CD8-positive, alpha-beta T cell (primary cell): ENCODE measurements at regions of chr6 and their contacts with region 1.

Region 1: GRCh38 chr6:26025894-26026832 is 61.1 kb upstream of the HFE start:
- DNase-seq: peak; percentile 74 to 99 (median 89)
- ATAC-seq: peak; percentile 43
- H3K4me3 ChIP-seq: peak overlapping the region; percentile 50 to 76
- H3K4me3 Mint-ChIP-seq: peak overlapping the region; percentile 86
- H3K27ac ChIP-seq: peak overlapping the region; percentile 93 to 96
- H3K27ac Mint-ChIP-seq: peak overlapping the region; percentile 98
- H3K4me1 ChIP-seq: peaks cover 25% of the 10 kb centered on the region
- H3K4me1 Mint-ChIP-seq: peaks cover 48% of the 10 kb centered on the region
- H3K27me3 ChIP-seq: no peaks in the 10 kb centered on the region
- H3K27me3 Mint-ChIP-seq: no peaks in the 10 kb centered on the region
- CTCF ChIP-seq: peak; percentile 80

Region 2: DNA sequence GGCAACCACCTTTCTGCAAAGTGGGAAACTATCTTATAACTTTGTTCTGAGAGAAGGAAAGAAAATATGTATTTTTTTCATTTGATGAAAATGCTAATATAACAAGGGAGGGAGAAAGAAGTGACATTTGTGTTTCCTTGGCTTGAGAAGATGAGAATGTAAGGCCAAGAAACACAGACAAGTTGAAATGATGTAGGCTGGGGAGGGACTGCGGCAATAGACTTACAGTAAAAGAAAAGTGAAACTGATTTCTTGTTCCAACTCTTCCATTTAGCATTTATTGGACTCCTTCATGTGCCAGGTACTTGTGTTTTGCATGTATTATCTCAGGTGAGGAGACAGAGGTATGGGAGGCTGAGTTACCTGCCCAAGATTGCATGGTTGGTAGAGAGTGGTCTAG is 616.1 kb before region 1 on chr6:
- CTCF ChIA-PET with region 1: no interaction called
- POLR2A ChIA-PET with region 1: no interaction called
- intact Hi-C with region 1: no loop called
- DNase-seq: peak in 1 of 9 experiments; percentile 27
- ATAC-seq: peak; percentile 62
- H3K4me3 ChIP-seq: peak overlapping the region in 1 of 2 experiments; percentile 41
- H3K4me3 Mint-ChIP-seq: peak overlapping the region; percentile 78
- H3K27ac ChIP-seq: no peak overlapping the region
- H3K27ac Mint-ChIP-seq: peak overlapping the region; percentile 85
- H3K4me1 ChIP-seq: peaks cover 59% of the 10 kb centered on the region
- H3K4me1 Mint-ChIP-seq: peaks cover 50% of the 10 kb centered on the region
- H3K27me3 ChIP-seq: no peaks in the 10 kb centered on the region
- H3K27me3 Mint-ChIP-seq: no peaks in the 10 kb centered on the region
- CTCF ChIP-seq: no peak

Region 3: DNA sequence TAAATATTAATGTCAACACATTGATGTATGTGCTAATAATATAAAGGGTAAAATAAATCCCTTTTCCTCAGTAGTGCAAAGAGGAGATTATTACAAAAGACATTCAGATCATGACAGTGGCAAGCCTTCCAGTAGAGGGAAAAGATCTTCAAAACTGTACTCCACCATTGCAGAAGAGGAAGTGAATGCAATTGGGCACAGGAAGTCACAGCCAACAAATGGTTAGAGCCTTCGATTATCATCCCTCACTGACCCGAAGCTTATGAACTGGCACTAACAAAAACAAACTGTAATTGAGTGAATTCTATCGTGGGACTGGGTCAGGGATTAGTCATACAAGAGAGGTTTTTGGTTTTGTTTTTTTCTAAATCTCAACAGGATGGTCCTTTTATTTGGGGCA is 413.5 kb before region 1 on chr6:
- CTCF ChIA-PET with region 1: no interaction called
- POLR2A ChIA-PET with region 1: no interaction called
- intact Hi-C with region 1: no loop called
- DNase-seq: no peak
- ATAC-seq: no peak
- H3K4me3 ChIP-seq: no peak overlapping the region
- H3K4me3 Mint-ChIP-seq: no peak overlapping the region
- H3K27ac ChIP-seq: no peak overlapping the region
- H3K27ac Mint-ChIP-seq: no peak overlapping the region
- H3K4me1 ChIP-seq: no peaks in the 10 kb centered on the region
- H3K4me1 Mint-ChIP-seq: no peaks in the 10 kb centered on the region
- H3K27me3 ChIP-seq: no peaks in the 10 kb centered on the region
- H3K27me3 Mint-ChIP-seq: no peaks in the 10 kb centered on the region
- CTCF ChIP-seq: no peak

Region 4: GRCh38 chr6:25992413-25993037 is 33.6 kb before region 1 on chr6:
- CTCF ChIA-PET with region 1: interaction called, 43 read pairs
- POLR2A ChIA-PET with region 1: interaction called, 63 read pairs
- intact Hi-C with region 1: no loop called
- DNase-seq: peak; percentile 87 to 97 (median 94)
- ATAC-seq: peak; percentile 96
- H3K4me3 ChIP-seq: peak overlapping the region; percentile 62 to 85
- H3K4me3 Mint-ChIP-seq: peak overlapping the region; percentile 96
- H3K27ac ChIP-seq: peak overlapping the region; percentile 63 to 81
- H3K27ac Mint-ChIP-seq: peak overlapping the region; percentile 96
- H3K4me1 ChIP-seq: peaks cover 3% of the 10 kb centered on the region
- H3K4me1 Mint-ChIP-seq: peaks cover 32% of the 10 kb centered on the region
- H3K27me3 ChIP-seq: no peaks in the 10 kb centered on the region
- H3K27me3 Mint-ChIP-seq: no peaks in the 10 kb centered on the region
- CTCF ChIP-seq: peak; percentile 100

Region 5: DNA sequence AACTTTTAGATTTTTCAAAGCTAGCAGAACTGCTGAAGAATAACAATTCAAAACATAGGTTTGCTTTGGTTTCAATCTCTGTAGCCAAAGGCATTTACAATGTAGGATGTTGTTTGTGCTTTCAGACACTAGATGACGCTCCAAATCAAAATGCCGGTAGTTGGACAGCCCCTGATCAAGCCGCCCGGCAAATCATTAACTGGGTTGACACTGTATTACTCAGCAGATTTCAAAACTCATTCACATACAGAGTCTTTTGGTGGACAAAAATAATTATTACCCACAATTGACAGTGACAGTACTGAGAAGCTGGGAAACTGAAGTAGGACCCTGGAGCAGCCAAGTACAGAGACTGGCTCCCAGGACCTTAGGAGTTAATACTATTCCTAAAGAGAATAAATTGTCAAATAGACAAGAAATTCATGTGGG is 39.8 kb after region 1 on chr6:
- CTCF ChIA-PET with region 1: interaction called, 18 read pairs
- POLR2A ChIA-PET with region 1: interaction called, 3 read pairs
- intact Hi-C with region 1: no loop called
- DNase-seq: peak in 7 of 9 experiments; percentile 32 to 86 (median 58)
- ATAC-seq: peak; percentile 95
- H3K4me3 ChIP-seq: no peak overlapping the region
- H3K4me3 Mint-ChIP-seq: no peak overlapping the region
- H3K27ac ChIP-seq: no peak overlapping the region
- H3K27ac Mint-ChIP-seq: no peak overlapping the region
- H3K4me1 ChIP-seq: peaks cover 6% of the 10 kb centered on the region
- H3K4me1 Mint-ChIP-seq: peaks cover 5% of the 10 kb centered on the region
- H3K27me3 ChIP-seq: no peaks in the 10 kb centered on the region
- H3K27me3 Mint-ChIP-seq: peaks cover 1% of the 10 kb centered on the region
- CTCF ChIP-seq: peak; percentile 95

Region 6: GRCh38 chr6:26196846-26197648 is 170.9 kb after region 1 on chr6:
- CTCF ChIA-PET with region 1: interaction called, 3 read pairs
- POLR2A ChIA-PET with region 1: interaction called, 64 read pairs
- intact Hi-C with region 1: loop called in 1 of 2 experiments (anchors 5 kb)
- DNase-seq: peak; percentile 53 to 95 (median 79)
- ATAC-seq: peak; percentile 57
- H3K4me3 ChIP-seq: peak overlapping the region; percentile 78 to 82
- H3K4me3 Mint-ChIP-seq: peak overlapping the region; percentile 96
- H3K27ac ChIP-seq: peak overlapping the region; percentile 88 to 89
- H3K27ac Mint-ChIP-seq: peak overlapping the region; percentile 99
- H3K4me1 ChIP-seq: peaks cover 20% of the 10 kb centered on the region
- H3K4me1 Mint-ChIP-seq: peaks cover 44% of the 10 kb centered on the region
- H3K27me3 ChIP-seq: no peaks in the 10 kb centered on the region
- H3K27me3 Mint-ChIP-seq: no peaks in the 10 kb centered on the region
- CTCF ChIP-seq: no peak

Region 7: GRCh38 chr6:26472549-26473290 is 446.6 kb after region 1 on chr6:
- CTCF ChIA-PET with region 1: no interaction called
- POLR2A ChIA-PET with region 1: no interaction called
- intact Hi-C with region 1: no loop called
- DNase-seq: peak in 2 of 9 experiments; percentile 28 to 60
- ATAC-seq: no peak
- H3K4me3 ChIP-seq: peak overlapping the region in 1 of 2 experiments; percentile 17
- H3K4me3 Mint-ChIP-seq: peak overlapping the region; percentile 93
- H3K27ac ChIP-seq: peak overlapping the region; percentile 82 to 98
- H3K27ac Mint-ChIP-seq: peak overlapping the region; percentile 99
- H3K4me1 ChIP-seq: peaks cover 39% of the 10 kb centered on the region
- H3K4me1 Mint-ChIP-seq: peaks cover 49% of the 10 kb centered on the region
- H3K27me3 ChIP-seq: no peaks in the 10 kb centered on the region
- H3K27me3 Mint-ChIP-seq: no peaks in the 10 kb centered on the region
- CTCF ChIP-seq: no peak

Region 8: DNA sequence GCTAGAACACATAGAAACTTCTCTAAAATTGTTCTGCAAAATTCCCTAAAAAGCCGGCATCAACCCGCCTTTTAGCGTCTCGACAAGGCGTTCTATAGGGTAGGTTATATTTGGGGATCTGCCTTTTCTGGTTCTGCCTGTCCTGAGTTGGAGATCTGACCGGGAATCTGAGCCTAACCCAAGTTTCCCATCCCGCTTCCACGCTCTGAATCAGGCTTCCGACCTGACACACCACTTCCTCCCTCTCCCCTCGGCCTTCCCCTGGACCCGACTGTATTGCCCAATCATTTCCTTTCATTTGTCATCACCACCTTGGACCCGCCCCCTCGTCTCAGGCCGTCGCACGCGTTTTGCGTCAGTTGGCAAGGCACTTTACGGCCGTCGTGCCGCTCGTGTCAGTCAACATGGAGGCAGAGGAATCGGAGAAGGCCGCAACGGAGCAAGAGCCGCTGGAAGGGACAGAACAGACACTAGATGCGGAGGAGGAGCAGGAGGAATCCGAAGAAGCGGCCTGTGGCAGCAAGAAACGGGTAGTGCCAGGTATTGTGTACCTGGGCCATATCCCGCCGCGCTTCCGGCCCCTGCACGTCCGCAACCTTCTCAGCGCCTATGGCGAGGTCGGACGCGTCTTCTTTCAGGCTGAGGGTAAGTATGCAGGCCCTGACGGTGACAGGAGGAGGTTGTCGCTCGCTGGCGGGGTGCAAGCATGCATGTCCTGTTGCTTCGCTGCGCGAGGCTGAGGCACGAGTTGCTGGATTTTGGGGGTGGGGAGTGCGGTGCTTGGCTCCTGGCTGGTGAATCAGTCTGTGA is 570.6 kb after region 1 on chr6 and contains the start of gene ABT1:
- CTCF ChIA-PET with region 1: no interaction called
- POLR2A ChIA-PET with region 1: no interaction called
- intact Hi-C with region 1: loop called in 1 of 2 experiments (anchors 10 kb)
- DNase-seq: peak; percentile 94 to 99 (median 97)
- ATAC-seq: peak; percentile 85
- H3K4me3 ChIP-seq: peak within 1 kb of the TSS; percentile 93 to 94
- H3K4me3 Mint-ChIP-seq: no peak within 1 kb of the TSS
- H3K27ac ChIP-seq: peak within 1 kb of the TSS; percentile 90 to 94
- H3K27ac Mint-ChIP-seq: no peak within 1 kb of the TSS
- H3K4me1 ChIP-seq: peaks cover 18% of the 10 kb centered on the region
- H3K4me1 Mint-ChIP-seq: peaks cover 23% of the 10 kb centered on the region
- H3K27me3 ChIP-seq: peaks cover 0 to 4% of the 10 kb centered on the region in 2 experiments
- H3K27me3 Mint-ChIP-seq: peaks cover 10% of the 10 kb centered on the region
- CTCF ChIP-seq: no peak
- total RNA-seq, gene ABT1: 42.5 to 44.2 TPM

Region 9: DNA sequence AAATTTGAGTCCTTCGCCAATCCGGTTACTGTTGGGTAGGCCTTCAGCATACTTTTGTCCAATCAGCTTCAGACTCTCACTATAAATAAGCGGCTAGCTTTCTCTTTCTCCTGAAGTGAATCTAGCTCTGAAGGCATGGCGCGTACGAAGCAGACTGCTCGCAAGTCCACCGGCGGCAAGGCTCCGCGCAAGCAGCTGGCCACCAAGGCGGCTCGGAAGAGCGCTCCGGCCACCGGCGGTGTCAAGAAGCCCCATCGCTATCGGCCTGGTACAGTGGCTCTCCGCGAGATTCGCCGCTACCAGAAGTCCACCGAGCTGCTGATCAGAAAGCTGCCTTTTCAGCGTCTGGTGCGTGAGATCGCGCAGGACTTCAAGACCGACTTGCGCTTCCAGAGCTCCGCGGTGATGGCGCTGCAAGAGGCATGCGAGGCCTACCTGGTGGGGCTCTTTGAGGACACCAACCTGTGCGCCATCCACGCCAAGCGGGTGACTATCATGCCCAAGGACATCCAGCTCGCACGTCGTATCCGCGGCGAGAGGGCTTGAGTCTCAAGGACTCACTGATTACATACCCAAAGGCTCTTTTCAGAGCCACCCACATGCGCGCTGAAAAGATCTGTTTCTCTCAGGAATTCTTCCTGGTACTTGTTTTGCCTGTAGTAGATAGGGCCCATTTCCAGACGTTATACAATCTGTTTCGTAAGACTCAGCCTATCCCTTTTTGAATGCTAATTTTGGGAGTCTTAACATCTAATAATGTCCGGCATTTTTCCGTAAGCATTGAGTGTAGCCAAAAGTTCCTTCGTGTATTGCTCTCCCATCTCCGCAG is 1784.0 kb after region 1 on chr6:
- CTCF ChIA-PET with region 1: no interaction called
- POLR2A ChIA-PET with region 1: interaction called, 29 read pairs
- intact Hi-C with region 1: no loop called
- DNase-seq: peak; percentile 63 to 96 (median 74)
- ATAC-seq: peak; percentile 60
- H3K4me3 ChIP-seq: peak overlapping the region; percentile 52 to 65
- H3K4me3 Mint-ChIP-seq: peak overlapping the region; percentile 95
- H3K27ac ChIP-seq: peak overlapping the region; percentile 83 to 87
- H3K27ac Mint-ChIP-seq: peak overlapping the region; percentile 99
- H3K4me1 ChIP-seq: peaks cover 36% of the 10 kb centered on the region
- H3K4me1 Mint-ChIP-seq: peaks cover 57% of the 10 kb centered on the region
- H3K27me3 ChIP-seq: no peaks in the 10 kb centered on the region
- H3K27me3 Mint-ChIP-seq: no peaks in the 10 kb centered on the region
- CTCF ChIP-seq: no peak